ENCODE measurements at regions of chr11 and their contacts with region 1.

Region 1: GRCh38 chr11:61792310-61793085 is at the starts of genes FEN1 and TMEM258:
- DNase-seq: peak; percentile 92 to 95 (median 93)
- H3K4me3 ChIP-seq: peak within 1 kb of the TSS; percentile 48 to 94 (median 84)
- H3K27ac ChIP-seq: peak within 1 kb of the TSS; percentile 99
- H3K4me1 ChIP-seq: peaks cover 11 to 29% (median 25%) of the 10 kb centered on the region in 4 experiments
- H3K27me3 ChIP-seq: no peaks in the 10 kb centered on the region

Region 2: GRCh38 chr11:61028272-61028761 is 764.2 kb before region 1 on chr11:
- CTCF ChIA-PET with region 1: no interaction called
- POLR2A ChIA-PET with region 1: no interaction called
- DNase-seq: peak; percentile 50 to 84 (median 83)
- H3K4me3 ChIP-seq: no peak overlapping the region
- H3K27ac ChIP-seq: no peak overlapping the region
- H3K4me1 ChIP-seq: peaks cover 0 to 49% (median 33%) of the 10 kb centered on the region in 4 experiments
- H3K27me3 ChIP-seq: no peaks in the 10 kb centered on the region

Region 3: GRCh38 chr11:61747192-61747966 is 45.1 kb before region 1 on chr11:
- CTCF ChIA-PET with region 1: interaction called, 15 read pairs
- POLR2A ChIA-PET with region 1: no interaction called
- DNase-seq: peak in 2 of 3 donors; percentile 37 to 43
- H3K4me3 ChIP-seq: no peak overlapping the region
- H3K27ac ChIP-seq: no peak overlapping the region
- H3K4me1 ChIP-seq: peaks cover 0 to 4% (median 3%) of the 10 kb centered on the region in 4 experiments
- H3K27me3 ChIP-seq: peaks cover 0 to 12% (median 2%) of the 10 kb centered on the region in 5 experiments

Region 4: GRCh38 chr11:61803889-61804647 is 11.6 kb after region 1 on chr11:
- CTCF ChIA-PET with region 1: interaction called, 56 read pairs
- POLR2A ChIA-PET with region 1: no interaction called
- DNase-seq: no peak
- H3K4me3 ChIP-seq: no peak overlapping the region
- H3K27ac ChIP-seq: no peak overlapping the region
- H3K4me1 ChIP-seq: no peaks in the 10 kb centered on the region
- H3K27me3 ChIP-seq: no peaks in the 10 kb centered on the region

Region 5: GRCh38 chr11:61827571-61828378 is 35.3 kb after region 1 on chr11 and contains the start of gene FADS2:
- CTCF ChIA-PET with region 1: interaction called, 14 read pairs
- POLR2A ChIA-PET with region 1: interaction called, 3 read pairs
- DNase-seq: peak; percentile 81 to 92 (median 89)
- H3K4me3 ChIP-seq: peak within 1 kb of the TSS; percentile 53 to 97 (median 84)
- H3K27ac ChIP-seq: peak within 1 kb of the TSS; percentile 64 to 79
- H3K4me1 ChIP-seq: peaks cover 24 to 61% (median 54%) of the 10 kb centered on the region in 4 experiments
- H3K27me3 ChIP-seq: no peaks in the 10 kb centered on the region

Region 6: DNA sequence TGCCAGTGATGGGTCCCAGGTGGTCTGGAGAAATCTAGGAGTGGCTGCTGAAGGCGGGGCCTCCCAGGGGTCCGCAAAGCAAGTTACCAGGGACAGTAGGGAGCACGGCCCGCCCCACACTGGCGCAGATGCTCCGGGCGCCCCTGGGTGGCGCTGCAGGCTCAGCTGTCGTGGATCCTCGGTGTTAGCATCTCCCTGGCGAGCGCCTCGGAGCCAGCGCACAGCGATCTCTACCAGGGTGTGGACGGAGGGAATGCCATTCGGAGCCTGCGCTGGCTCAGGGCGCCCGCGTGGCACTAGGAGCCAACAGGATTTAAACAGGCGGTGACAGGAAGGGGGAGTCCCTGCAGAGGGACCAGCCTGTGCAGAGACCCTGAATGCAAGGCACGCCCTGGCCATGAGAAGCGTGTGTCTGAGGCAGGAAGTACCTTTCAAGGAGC is 78.7 kb after region 1 on chr11:
- CTCF ChIA-PET with region 1: interaction called, 38 read pairs
- POLR2A ChIA-PET with region 1: no interaction called
- DNase-seq: peak; percentile 65 to 76 (median 76)
- H3K4me3 ChIP-seq: peak overlapping the region in 4 of 7 experiments; percentile 26 to 72 (median 47)
- H3K27ac ChIP-seq: no peak overlapping the region
- H3K4me1 ChIP-seq: peaks cover 0 to 14% (median 6%) of the 10 kb centered on the region in 4 experiments
- H3K27me3 ChIP-seq: peaks cover 0 to 2% (median 0%) of the 10 kb centered on the region in 5 experiments

Region 7: DNA sequence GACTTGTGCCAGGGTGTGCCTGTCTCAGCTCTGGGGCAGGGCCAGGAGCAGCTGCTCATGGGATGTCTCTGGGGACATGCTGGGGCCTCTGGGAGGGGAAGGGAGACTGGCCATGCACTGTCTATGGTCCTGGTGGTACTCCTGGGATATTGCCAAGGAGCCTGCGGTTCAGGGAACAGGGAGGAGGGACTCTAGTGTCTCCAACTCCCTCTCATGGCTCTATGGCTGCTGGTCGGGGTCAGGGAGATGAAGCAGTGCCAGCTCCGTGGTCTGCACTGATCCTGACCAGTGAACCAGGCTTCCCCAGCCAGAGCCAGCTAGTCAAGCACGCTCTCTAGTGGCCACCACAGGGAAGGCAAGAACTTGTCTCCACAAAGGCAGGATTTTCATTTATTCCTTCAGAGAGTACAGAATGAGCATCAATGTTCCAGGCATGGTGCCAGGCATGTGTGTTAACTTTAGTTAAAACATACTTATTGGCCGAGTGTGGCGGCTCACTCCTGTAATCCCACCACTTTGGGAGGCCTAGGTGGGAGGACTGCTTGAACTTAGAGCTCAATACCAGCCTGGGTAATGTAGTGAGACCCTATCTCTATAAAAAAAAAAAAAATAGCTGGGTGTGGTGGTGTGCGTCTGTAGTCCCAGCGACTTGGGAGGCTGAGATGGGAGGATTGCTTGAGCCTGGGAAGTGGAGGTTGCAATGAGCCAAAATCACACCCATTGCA is 155.2 kb after region 1 on chr11:
- CTCF ChIA-PET with region 1: interaction called, 40 read pairs
- POLR2A ChIA-PET with region 1: no interaction called
- DNase-seq: peak; percentile 77 to 85 (median 78)
- H3K4me3 ChIP-seq: no peak overlapping the region
- H3K27ac ChIP-seq: no peak overlapping the region
- H3K4me1 ChIP-seq: peaks cover 0 to 5% (median 1%) of the 10 kb centered on the region in 4 experiments
- H3K27me3 ChIP-seq: no peaks in the 10 kb centered on the region

Region 8: DNA sequence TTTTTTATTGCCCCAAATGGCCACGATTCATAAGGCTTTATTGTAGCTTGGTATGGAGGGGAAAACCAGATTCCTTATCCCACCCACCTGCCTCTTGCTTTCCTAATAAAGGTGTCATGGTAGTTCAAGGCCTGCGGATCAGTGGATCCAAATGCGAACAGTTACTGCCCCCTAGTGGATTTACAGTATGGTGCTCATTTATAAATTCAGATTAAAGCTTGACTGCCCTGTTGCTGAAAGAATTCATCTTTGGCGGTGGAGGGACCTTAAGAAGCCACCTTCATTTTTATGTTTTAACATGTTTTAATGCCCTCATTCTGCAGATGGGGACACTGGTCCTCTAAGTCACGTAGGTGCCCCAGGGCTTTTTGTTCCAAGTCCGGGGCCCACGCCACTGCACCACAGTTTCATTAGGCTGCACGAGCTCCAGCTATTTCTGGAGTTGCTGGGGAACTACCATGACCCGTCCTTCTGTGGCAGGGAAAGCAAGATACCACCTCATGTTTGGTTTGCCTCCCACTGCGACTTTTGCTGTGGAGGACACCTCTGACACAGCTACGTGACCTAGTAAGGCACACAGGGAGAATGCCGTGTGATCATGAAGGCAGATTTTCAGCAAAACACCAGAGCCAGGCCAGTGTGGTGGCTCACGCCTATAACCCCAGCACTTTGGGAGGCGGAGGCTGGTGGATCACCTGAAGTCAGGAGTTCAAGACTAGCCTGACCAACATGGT is 315.7 kb after region 1 on chr11:
- CTCF ChIA-PET with region 1: interaction called, 32 read pairs
- POLR2A ChIA-PET with region 1: no interaction called
- DNase-seq: peak; percentile 72 to 86 (median 78)
- H3K4me3 ChIP-seq: no peak overlapping the region
- H3K27ac ChIP-seq: no peak overlapping the region
- H3K4me1 ChIP-seq: peaks cover 0 to 21% (median 12%) of the 10 kb centered on the region in 4 experiments
- H3K27me3 ChIP-seq: peaks cover 0 to 4% (median 0%) of the 10 kb centered on the region in 5 experiments

Measured in common myeloid progenitor, CD34-positive (primary cell).